Activated naive CD4-positive, alpha-beta T cell treated with anti-CD3 and anti-CD28 coated beads, Interleukin-2, amount 10 ng/mL, durations not matched to agents 7 days and 5 days (primary cell): ENCODE measurements at regions of chr19 and their contacts with region 1.

Region 1: GRCh38 chr19:32976208-32976805 is 4.3 kb downstream of the FAAP24 start:
- DNase-seq: peak; percentile 87
- H3K4me3 Mint-ChIP-seq: no peak overlapping the region
- H3K27ac Mint-ChIP-seq: no peak overlapping the region
- H3K4me1 Mint-ChIP-seq: peaks cover 21% of the 10 kb centered on the region
- H3K27me3 Mint-ChIP-seq: no peaks in the 10 kb centered on the region

Region 2: DNA sequence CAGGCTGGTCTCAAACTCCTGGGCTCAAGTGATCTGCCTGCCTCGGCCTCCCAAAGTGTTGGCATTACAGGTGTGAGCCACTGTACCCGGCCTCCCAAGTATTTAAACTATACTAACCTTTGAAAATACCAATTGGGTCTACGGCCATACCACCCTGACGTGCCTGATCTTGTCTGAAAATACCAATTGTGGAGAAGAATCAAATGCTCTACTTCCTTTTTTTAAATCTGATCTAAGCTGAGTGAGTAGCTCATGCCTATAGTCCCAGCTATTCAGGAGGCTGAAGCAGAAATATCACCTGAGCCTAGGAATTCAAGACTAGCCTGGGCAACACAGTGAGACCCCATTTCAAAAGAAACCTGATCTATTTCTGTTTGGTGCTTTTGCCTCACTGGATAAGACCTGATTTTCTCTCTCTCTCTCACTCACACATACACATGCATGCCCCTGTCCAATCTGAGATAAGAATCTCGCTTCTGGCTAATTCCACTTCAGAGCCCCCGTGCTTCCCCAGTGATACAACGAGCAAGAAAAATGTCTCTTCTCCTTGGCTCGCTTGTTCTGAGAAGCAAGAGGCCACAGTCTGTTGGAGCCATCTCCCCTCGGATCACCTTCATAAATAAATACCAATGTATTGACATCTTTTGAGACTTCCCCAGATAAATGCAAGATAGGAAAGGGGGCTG is 34.7 kb after region 1 on chr19:
- CTCF ChIA-PET with region 1: no interaction called
- DNase-seq: no peak
- H3K4me3 Mint-ChIP-seq: no peak overlapping the region
- H3K27ac Mint-ChIP-seq: no peak overlapping the region
- H3K4me1 Mint-ChIP-seq: no peaks in the 10 kb centered on the region
- H3K27me3 Mint-ChIP-seq: no peaks in the 10 kb centered on the region

Region 3: GRCh38 chr19:33085570-33086128 is 109.3 kb after region 1 on chr19:
- CTCF ChIA-PET with region 1: no interaction called
- DNase-seq: no peak
- H3K4me3 Mint-ChIP-seq: no peak overlapping the region
- H3K27ac Mint-ChIP-seq: no peak overlapping the region
- H3K4me1 Mint-ChIP-seq: peaks cover 25% of the 10 kb centered on the region
- H3K27me3 Mint-ChIP-seq: no peaks in the 10 kb centered on the region

Region 4: GRCh38 chr19:33118643-33119042 is 142.3 kb after region 1 on chr19:
- CTCF ChIA-PET with region 1: interaction called, 25 read pairs
- DNase-seq: no peak
- H3K4me3 Mint-ChIP-seq: no peak overlapping the region
- H3K27ac Mint-ChIP-seq: no peak overlapping the region
- H3K4me1 Mint-ChIP-seq: no peaks in the 10 kb centered on the region
- H3K27me3 Mint-ChIP-seq: no peaks in the 10 kb centered on the region